Calu3 (cell line): ENCODE measurements at regions of chr12 and their contacts with region 1.

Region 1: DNA sequence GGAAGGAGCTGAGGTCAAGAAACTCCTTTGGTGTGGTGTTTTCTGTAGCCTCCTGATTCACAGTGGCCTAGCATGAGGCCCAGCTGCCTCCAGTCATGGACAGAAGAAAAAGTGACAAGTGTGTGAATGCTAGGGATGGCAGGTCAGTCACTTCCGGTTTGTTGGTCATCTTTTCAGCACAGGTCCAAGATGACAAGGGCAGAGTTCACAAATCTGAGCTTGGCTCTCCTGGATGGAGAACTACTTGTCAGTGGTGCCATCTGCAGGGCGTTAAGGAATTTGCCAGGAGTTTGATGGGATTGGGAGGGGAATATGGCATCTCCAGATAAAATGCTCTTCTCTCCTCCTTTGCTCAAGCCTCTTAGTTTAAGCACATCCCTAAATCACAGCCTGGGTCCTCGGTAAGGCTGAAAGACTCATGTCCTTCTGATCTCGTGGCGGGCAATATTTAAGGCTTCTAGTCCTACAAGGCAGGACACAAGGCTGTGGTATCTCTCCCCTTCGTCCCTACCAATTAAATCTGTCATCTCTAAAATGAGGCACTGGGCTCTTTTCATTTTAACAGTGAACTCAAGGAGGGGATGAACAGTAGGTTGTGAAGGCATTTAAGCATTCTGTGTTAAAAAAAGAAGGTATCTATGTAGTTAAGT is 10.0 kb downstream of the TUBA1B start:
- DNase-seq: peak; percentile 41
- H3K4me3 Mint-ChIP-seq: no peak overlapping the region
- H3K27ac Mint-ChIP-seq: no peak overlapping the region
- H3K4me1 Mint-ChIP-seq: no peaks in the 10 kb centered on the region
- H3K27me3 Mint-ChIP-seq: no peaks in the 10 kb centered on the region
- CTCF ChIP-seq: peak; percentile 13

Region 2: GRCh38 chr12:49064767-49065152 is 56.4 kb before region 1 on chr12:
- CTCF ChIA-PET with region 1: interaction called, 7 read pairs
- intact Hi-C with region 1: loop called (anchors 1 kb)
- DNase-seq: no peak
- H3K4me3 Mint-ChIP-seq: no peak overlapping the region
- H3K27ac Mint-ChIP-seq: no peak overlapping the region
- H3K4me1 Mint-ChIP-seq: peaks cover 9% of the 10 kb centered on the region
- H3K27me3 Mint-ChIP-seq: no peaks in the 10 kb centered on the region
- CTCF ChIP-seq: no peak

Region 3: GRCh38 chr12:49088190-49088931 is 32.8 kb before region 1 on chr12:
- CTCF ChIA-PET with region 1: interaction called, 29 read pairs
- intact Hi-C with region 1: loop called (anchors 5 kb)
- DNase-seq: peak; percentile 70
- H3K4me3 Mint-ChIP-seq: no peak overlapping the region
- H3K27ac Mint-ChIP-seq: no peak overlapping the region
- H3K4me1 Mint-ChIP-seq: no peaks in the 10 kb centered on the region
- H3K27me3 Mint-ChIP-seq: peaks cover 39% of the 10 kb centered on the region
- CTCF ChIP-seq: peak; percentile 55

Region 4: DNA sequence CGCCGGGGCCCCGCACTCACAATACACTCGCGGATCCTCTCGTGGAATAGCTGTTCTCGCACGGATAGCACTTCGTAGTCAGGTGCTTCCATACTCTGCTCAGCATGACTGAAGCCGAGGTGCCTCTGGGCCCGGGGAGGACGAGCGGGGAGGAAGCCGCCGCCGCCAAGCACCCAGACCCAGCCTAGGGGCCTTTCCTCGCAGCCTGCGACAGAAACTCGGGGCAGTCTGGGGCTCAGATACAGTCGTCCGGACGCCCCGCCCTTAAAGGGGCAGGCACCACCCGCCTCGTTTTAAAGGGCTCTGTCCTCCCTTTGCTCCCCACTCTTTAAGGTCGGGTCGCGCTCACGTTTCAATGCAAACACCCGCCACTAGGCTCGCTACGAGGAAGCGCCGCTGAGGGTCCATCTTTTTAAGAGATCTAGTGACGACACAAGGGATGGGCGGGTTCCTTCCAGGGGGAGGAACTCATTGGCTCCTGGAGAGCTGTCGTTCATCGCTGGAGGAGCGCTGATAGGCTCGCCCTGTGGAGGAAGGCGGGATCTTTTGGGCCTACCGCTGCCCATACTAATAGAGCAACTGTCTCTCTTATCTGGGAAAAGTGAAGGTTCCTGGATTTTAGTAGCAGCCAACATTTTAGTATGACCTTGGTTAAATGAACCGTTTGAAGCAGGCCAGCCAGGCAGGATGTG is 10.6 kb before region 1 on chr12 and contains the start of gene LMBR1L:
- CTCF ChIA-PET with region 1: interaction called, 10 read pairs
- intact Hi-C with region 1: no loop called
- DNase-seq: peak; percentile 88
- H3K4me3 Mint-ChIP-seq: peak within 1 kb of the TSS; percentile 94
- H3K27ac Mint-ChIP-seq: peak within 1 kb of the TSS; percentile 78
- H3K4me1 Mint-ChIP-seq: peaks cover 13% of the 10 kb centered on the region
- H3K27me3 Mint-ChIP-seq: no peaks in the 10 kb centered on the region
- CTCF ChIP-seq: no peak
- total RNA-seq, gene LMBR1L: 23.3 and 26.4 TPM in 2 replicates